MCF 10A (cell line): ENCODE measurements at regions of chr12 and their contacts with region 1.

Region 1: DNA sequence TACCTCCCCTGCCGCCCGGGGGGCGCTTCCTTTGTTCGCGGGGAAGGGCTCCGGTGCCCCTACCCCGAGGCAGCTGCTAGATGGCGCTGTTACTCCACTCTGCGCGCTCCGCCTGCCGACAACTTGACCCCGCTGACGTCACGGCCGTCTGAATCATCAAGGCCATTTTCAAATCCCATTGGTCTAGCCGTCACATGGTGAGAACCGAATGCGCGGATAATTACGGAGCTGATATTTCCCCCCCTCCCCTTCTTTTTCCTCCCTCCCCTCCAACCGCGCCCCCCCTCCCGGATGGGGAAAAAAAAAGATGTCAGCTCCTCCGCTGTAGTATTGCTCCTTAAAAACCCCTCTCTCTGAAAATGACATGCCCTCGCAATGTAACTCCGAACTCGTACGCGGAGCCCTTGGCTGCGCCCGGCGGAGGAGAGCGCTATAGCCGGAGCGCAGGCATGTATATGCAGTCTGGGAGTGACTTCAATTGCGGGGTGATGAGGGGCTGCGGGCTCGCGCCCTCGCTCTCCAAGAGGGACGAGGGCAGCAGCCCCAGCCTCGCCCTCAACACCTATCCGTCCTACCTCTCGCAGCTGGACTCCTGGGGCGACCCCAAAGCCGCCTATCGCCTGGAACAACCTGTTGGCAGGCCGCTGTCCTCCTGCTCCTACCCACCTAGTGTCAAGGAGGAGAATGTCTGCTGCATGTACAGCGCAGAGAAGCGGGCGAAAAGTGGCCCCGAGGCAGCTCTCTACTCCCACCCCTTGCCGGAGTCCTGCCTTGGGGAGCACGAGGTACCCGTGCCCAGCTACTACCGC is at the start of gene HOXC10:
- DNase-seq: peak; percentile 93
- H3K4me3 Mint-ChIP-seq: no peak within 1 kb of the TSS
- H3K27ac Mint-ChIP-seq: no peak within 1 kb of the TSS
- H3K4me1 Mint-ChIP-seq: peaks cover 20% of the 10 kb centered on the region
- H3K27me3 Mint-ChIP-seq: no peaks in the 10 kb centered on the region
- CTCF ChIP-seq: peak; percentile 64
- total RNA-seq, gene HOXC10: not detected in 2 replicates

Region 2: GRCh38 chr12:53764615-53765014 is 220.5 kb before region 1 on chr12:
- CTCF ChIA-PET with region 1: interaction called, 27 read pairs
- POLR2A ChIA-PET with region 1: interaction called, 4 read pairs
- intact Hi-C with region 1: loop called (anchors 1 kb)
- DNase-seq: no peak
- H3K4me3 Mint-ChIP-seq: no peak overlapping the region
- H3K27ac Mint-ChIP-seq: no peak overlapping the region
- H3K4me1 Mint-ChIP-seq: peaks cover 17% of the 10 kb centered on the region
- H3K27me3 Mint-ChIP-seq: peaks cover 6% of the 10 kb centered on the region
- CTCF ChIP-seq: no peak

Region 3: DNA sequence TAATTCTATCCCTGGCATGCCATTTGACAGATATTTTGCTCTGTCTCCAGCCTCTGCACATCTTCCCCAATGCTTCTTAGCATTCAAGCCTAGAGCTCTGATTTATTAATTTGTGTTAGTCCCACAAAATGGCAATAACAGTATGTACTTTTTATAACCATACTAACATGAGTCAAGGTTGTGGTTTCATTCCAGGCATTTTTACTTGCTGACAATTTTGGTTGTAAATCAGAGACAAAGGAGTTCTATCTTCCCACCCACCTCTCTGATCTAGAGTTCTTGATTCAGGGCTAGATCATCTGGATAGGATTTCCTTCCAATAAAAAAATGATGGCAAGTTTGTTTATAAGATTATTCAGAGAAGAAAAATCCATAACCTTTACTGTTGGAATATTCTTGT is 214.8 kb before region 1 on chr12:
- CTCF ChIA-PET with region 1: interaction called, 27 read pairs
- POLR2A ChIA-PET with region 1: interaction called, 4 read pairs
- intact Hi-C with region 1: loop called (anchors 1 kb)
- DNase-seq: peak; percentile 61
- H3K4me3 Mint-ChIP-seq: peak overlapping the region; percentile 0
- H3K27ac Mint-ChIP-seq: peak overlapping the region; percentile 6
- H3K4me1 Mint-ChIP-seq: peaks cover 25% of the 10 kb centered on the region
- H3K27me3 Mint-ChIP-seq: no peaks in the 10 kb centered on the region
- CTCF ChIP-seq: no peak

Region 4: GRCh38 chr12:53791735-53792326 is 193.3 kb before region 1 on chr12:
- CTCF ChIA-PET with region 1: interaction called, 8 read pairs
- POLR2A ChIA-PET with region 1: interaction called, 3 read pairs
- intact Hi-C with region 1: loop called (anchors 10 kb)
- DNase-seq: peak; percentile 52
- H3K4me3 Mint-ChIP-seq: no peak overlapping the region
- H3K27ac Mint-ChIP-seq: no peak overlapping the region
- H3K4me1 Mint-ChIP-seq: no peaks in the 10 kb centered on the region
- H3K27me3 Mint-ChIP-seq: no peaks in the 10 kb centered on the region
- CTCF ChIP-seq: peak; percentile 44

Region 5: DNA sequence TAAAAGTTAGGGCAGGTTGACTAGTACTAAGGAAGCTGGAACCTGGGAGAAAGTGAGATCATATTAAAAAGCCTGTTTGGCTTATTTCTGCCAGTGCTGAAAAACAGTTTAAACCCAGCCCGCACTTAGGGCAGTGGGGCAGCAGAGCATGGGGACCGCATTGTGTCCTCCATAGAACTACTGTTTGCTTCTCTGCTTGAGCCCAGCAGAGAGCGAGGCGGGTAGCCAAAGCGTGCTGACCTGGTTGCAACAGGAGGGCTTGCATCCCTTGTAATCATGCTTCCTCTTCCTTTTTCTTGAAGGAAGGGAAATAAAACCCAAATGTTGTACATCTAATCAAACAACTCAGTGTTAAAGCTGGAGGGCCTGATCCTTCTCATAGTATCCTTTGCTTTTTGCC is 129.0 kb before region 1 on chr12:
- CTCF ChIA-PET with region 1: no interaction called
- POLR2A ChIA-PET with region 1: no interaction called
- intact Hi-C with region 1: no loop called
- DNase-seq: no peak
- H3K4me3 Mint-ChIP-seq: no peak overlapping the region
- H3K27ac Mint-ChIP-seq: no peak overlapping the region
- H3K4me1 Mint-ChIP-seq: peaks cover 5% of the 10 kb centered on the region
- H3K27me3 Mint-ChIP-seq: no peaks in the 10 kb centered on the region
- CTCF ChIP-seq: no peak

Region 6: GRCh38 chr12:53974084-53975063 is 10.7 kb before region 1 on chr12 and contains the start of gene HOTAIR:
- CTCF ChIA-PET with region 1: interaction called, 11 read pairs
- POLR2A ChIA-PET with region 1: interaction called, 3 read pairs
- intact Hi-C with region 1: no loop called
- DNase-seq: peak; percentile 60
- H3K4me3 Mint-ChIP-seq: peak within 1 kb of the TSS; percentile 88
- H3K27ac Mint-ChIP-seq: peak within 1 kb of the TSS; percentile 88
- H3K4me1 Mint-ChIP-seq: peaks cover 19% of the 10 kb centered on the region
- H3K27me3 Mint-ChIP-seq: no peaks in the 10 kb centered on the region
- CTCF ChIP-seq: no peak
- total RNA-seq, gene HOTAIR: 1.5 and 2.0 TPM in 2 replicates

Region 7: DNA sequence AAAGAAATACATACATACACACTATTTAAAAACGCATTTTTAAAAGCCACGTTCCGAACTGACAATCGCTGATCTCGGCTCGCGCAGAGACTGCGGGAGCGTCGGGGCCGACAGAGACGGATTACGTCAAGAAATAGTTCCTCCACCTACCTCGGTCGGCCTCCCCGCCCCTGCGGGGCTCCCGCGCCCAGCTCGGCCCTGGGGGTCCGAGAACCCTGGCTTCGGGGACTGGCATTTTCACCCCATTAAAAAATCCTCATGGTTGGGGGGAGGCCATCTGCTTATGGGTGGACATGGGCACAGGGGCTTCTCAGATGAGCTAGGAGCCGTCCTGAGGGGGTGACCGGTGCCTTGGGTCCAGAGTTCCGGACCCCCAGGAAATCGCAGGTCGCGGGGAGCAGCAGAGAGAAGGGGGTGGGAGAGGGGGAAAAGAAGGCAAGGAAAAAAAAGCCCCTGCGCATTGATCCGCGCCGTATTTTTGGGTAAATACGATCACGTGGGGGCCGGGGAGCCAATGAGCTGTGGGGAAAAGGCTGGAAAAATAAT is 14.5 kb after region 1 on chr12:
- CTCF ChIA-PET with region 1: interaction called, 14 read pairs
- POLR2A ChIA-PET with region 1: interaction called, 12 read pairs
- intact Hi-C with region 1: no loop called
- DNase-seq: peak; percentile 90
- H3K4me3 Mint-ChIP-seq: peak overlapping the region; percentile 89
- H3K27ac Mint-ChIP-seq: peak overlapping the region; percentile 97
- H3K4me1 Mint-ChIP-seq: peaks cover 12% of the 10 kb centered on the region
- H3K27me3 Mint-ChIP-seq: no peaks in the 10 kb centered on the region
- CTCF ChIP-seq: no peak

Region 8: DNA sequence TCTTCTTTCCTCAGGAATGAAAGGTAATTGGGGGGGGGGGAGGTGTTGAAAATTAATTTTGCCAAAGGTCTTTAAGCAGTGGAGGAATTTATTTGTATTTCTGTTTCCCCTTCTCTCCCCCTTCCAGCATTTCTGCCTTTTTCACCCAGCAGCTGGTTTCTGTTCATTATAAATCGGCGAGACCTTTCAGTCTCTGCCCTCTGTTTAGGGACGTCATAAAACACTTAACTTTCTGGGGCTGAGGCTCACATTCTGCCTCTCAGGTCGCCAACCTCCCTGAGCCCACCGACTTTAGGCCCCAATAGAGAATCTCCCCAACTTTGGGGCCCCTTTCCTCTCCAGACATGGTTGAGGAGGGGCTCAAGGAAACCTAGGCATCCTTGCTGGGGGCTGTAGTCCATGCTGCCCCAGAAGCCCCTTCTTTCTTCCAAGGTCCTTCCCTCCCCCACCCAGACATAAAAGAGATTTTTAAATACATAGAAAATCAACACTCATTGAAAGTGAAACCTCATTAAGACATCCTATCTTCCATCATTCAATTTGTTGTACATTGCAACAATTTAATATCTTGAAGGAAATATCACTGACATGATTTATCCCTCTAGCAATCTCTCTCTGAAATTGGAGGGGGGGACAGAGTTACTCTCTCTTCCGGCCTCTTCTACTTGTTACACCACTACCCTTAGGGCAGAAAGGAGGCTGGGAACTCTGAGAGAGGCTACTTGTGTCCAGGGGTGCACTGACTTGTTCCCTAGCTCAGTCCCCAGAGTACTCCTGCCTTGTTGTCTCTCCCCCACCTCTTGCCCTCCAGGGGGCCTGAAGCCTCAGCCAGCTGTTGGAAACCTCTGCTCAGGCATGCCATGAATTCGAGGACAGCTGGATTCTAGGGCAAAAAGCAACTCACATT is 40.6 kb after region 1 on chr12:
- CTCF ChIA-PET with region 1: no interaction called
- POLR2A ChIA-PET with region 1: no interaction called
- intact Hi-C with region 1: no loop called
- DNase-seq: no peak
- H3K4me3 Mint-ChIP-seq: no peak overlapping the region
- H3K27ac Mint-ChIP-seq: no peak overlapping the region
- H3K4me1 Mint-ChIP-seq: peaks cover 9% of the 10 kb centered on the region
- H3K27me3 Mint-ChIP-seq: no peaks in the 10 kb centered on the region
- CTCF ChIP-seq: no peak